MCF 10A (cell line): ENCODE measurements at regions of chr11 and their contacts with region 1.

Region 1: DNA sequence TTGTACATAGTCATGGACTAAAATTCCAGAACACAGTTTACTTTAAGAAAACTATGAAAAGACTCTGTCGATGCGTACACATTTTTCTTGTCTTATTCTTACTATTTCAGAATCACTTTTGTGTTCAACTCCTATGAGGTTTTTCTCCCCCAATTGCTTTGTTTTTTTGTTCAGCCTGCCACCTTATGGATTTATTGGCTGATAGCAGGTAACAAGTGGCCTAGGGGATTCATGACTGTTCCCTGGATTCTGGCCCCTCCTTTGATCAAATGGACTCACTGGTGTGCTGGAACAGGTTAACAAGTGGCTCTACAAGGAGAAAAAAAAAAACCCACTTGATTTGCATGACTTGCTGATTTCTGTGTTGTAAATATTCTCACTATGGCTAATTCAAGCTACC is 10.6 kb downstream of the MMP20 start:
- DNase-seq: peak; percentile 14
- H3K4me3 Mint-ChIP-seq: no peak overlapping the region
- H3K27ac Mint-ChIP-seq: no peak overlapping the region
- H3K4me1 Mint-ChIP-seq: peaks cover 6% of the 10 kb centered on the region
- H3K27me3 Mint-ChIP-seq: no peaks in the 10 kb centered on the region
- CTCF ChIP-seq: no peak

Region 2: GRCh38 chr11:102171101-102171500 is 443.4 kb before region 1 on chr11:
- CTCF ChIA-PET with region 1: no interaction called
- POLR2A ChIA-PET with region 1: no interaction called
- intact Hi-C with region 1: no loop called
- DNase-seq: peak; percentile 64
- H3K4me3 Mint-ChIP-seq: no peak overlapping the region
- H3K27ac Mint-ChIP-seq: peak overlapping the region; percentile 76
- H3K4me1 Mint-ChIP-seq: peaks cover 34% of the 10 kb centered on the region
- H3K27me3 Mint-ChIP-seq: no peaks in the 10 kb centered on the region
- CTCF ChIP-seq: no peak

Region 3: GRCh38 chr11:102293873-102294601 is 320.4 kb before region 1 on chr11:
- CTCF ChIA-PET with region 1: interaction called, 27 read pairs
- POLR2A ChIA-PET with region 1: interaction called, 5 read pairs
- intact Hi-C with region 1: no loop called
- DNase-seq: peak; percentile 70
- H3K4me3 Mint-ChIP-seq: peak overlapping the region; percentile 35
- H3K27ac Mint-ChIP-seq: peak overlapping the region; percentile 7
- H3K4me1 Mint-ChIP-seq: peaks cover 18% of the 10 kb centered on the region
- H3K27me3 Mint-ChIP-seq: no peaks in the 10 kb centered on the region
- CTCF ChIP-seq: peak; percentile 52

Region 4: GRCh38 chr11:102367364-102367763 is 247.1 kb before region 1 on chr11:
- CTCF ChIA-PET with region 1: interaction called, 28 read pairs
- POLR2A ChIA-PET with region 1: interaction called, 3 read pairs
- intact Hi-C with region 1: no loop called
- DNase-seq: peak; percentile 10
- H3K4me3 Mint-ChIP-seq: no peak overlapping the region
- H3K27ac Mint-ChIP-seq: peak overlapping the region; percentile 32
- H3K4me1 Mint-ChIP-seq: no peaks in the 10 kb centered on the region
- H3K27me3 Mint-ChIP-seq: no peaks in the 10 kb centered on the region
- CTCF ChIP-seq: no peak

Region 5: GRCh38 chr11:102495161-102496042 is 119.1 kb before region 1 on chr11:
- CTCF ChIA-PET with region 1: interaction called, 54 read pairs
- POLR2A ChIA-PET with region 1: interaction called, 3 read pairs
- intact Hi-C with region 1: loop called (anchors 1 kb)
- DNase-seq: peak; percentile 93
- H3K4me3 Mint-ChIP-seq: no peak overlapping the region
- H3K27ac Mint-ChIP-seq: no peak overlapping the region
- H3K4me1 Mint-ChIP-seq: peaks cover 17% of the 10 kb centered on the region
- H3K27me3 Mint-ChIP-seq: no peaks in the 10 kb centered on the region
- CTCF ChIP-seq: no peak

Region 6: DNA sequence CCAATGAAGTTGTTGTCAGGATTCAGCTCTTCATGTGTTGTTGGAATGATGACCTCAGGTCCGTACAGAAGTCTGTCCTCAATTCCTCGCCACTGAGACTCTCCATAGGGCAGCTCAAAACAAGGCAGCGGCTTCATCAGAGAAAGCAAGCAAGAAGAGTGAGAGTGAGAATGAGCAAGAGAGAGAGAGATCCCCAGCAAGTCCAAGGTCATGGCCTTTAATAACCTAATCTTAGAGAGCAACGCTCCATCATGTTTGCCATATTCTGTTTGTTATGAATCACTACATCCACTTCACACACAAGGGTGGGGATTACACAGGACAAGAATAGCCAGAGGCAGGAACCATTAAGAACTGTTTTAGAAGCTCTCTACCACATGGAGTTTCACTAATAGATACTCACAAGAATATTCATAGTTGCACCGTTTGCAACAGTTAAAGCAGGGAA is 60.6 kb before region 1 on chr11:
- CTCF ChIA-PET with region 1: interaction called, 20 read pairs
- POLR2A ChIA-PET with region 1: interaction called, 4 read pairs
- intact Hi-C with region 1: no loop called
- DNase-seq: peak; percentile 46
- H3K4me3 Mint-ChIP-seq: no peak overlapping the region
- H3K27ac Mint-ChIP-seq: peak overlapping the region; percentile 37
- H3K4me1 Mint-ChIP-seq: peaks cover 32% of the 10 kb centered on the region
- H3K27me3 Mint-ChIP-seq: no peaks in the 10 kb centered on the region
- CTCF ChIP-seq: no peak

Region 7: GRCh38 chr11:102666331-102666957 is 52.0 kb after region 1 on chr11:
- CTCF ChIA-PET with region 1: interaction called, 58 read pairs
- POLR2A ChIA-PET with region 1: interaction called, 6 read pairs
- intact Hi-C with region 1: loop called (anchors 5 kb)
- DNase-seq: peak; percentile 63
- H3K4me3 Mint-ChIP-seq: no peak overlapping the region
- H3K27ac Mint-ChIP-seq: no peak overlapping the region
- H3K4me1 Mint-ChIP-seq: no peaks in the 10 kb centered on the region
- H3K27me3 Mint-ChIP-seq: no peaks in the 10 kb centered on the region
- CTCF ChIP-seq: peak; percentile 89